ENCODE measurements at regions of chr17 and their contacts with region 1.

Region 1: GRCh38 chr17:8189711-8190477 is at the start of gene BORCS6:
- DNase-seq: peak; percentile 98
- H3K4me3 Mint-ChIP-seq: no peak within 1 kb of the TSS
- H3K27ac Mint-ChIP-seq: peak within 1 kb of the TSS; percentile 92
- H3K4me1 Mint-ChIP-seq: peaks cover 12% of the 10 kb centered on the region
- H3K27me3 Mint-ChIP-seq: no peaks in the 10 kb centered on the region
- total RNA-seq, gene BORCS6: 4.7 and 5.7 TPM in 2 replicates

Region 2: GRCh38 chr17:7844292-7845154 is 345.4 kb before region 1 on chr17:
- intact Hi-C with region 1: loop called (anchors 10 kb)
- DNase-seq: peak; percentile 96
- H3K4me3 Mint-ChIP-seq: peak overlapping the region; percentile 99
- H3K27ac Mint-ChIP-seq: peak overlapping the region; percentile 100
- H3K4me1 Mint-ChIP-seq: peaks cover 37% of the 10 kb centered on the region
- H3K27me3 Mint-ChIP-seq: peaks cover 2% of the 10 kb centered on the region

Region 3: GRCh38 chr17:8156246-8156992 is 33.5 kb before region 1 on chr17:
- intact Hi-C with region 1: loop called (anchors 2 kb)
- DNase-seq: peak; percentile 100
- H3K4me3 Mint-ChIP-seq: no peak overlapping the region
- H3K27ac Mint-ChIP-seq: no peak overlapping the region
- H3K4me1 Mint-ChIP-seq: peaks cover 62% of the 10 kb centered on the region
- H3K27me3 Mint-ChIP-seq: no peaks in the 10 kb centered on the region

Region 4: GRCh38 chr17:8173056-8173870 is 16.6 kb before region 1 on chr17:
- intact Hi-C with region 1: loop called (anchors 1 kb)
- DNase-seq: peak; percentile 93
- H3K4me3 Mint-ChIP-seq: peak overlapping the region; percentile 98
- H3K27ac Mint-ChIP-seq: peak overlapping the region; percentile 99
- H3K4me1 Mint-ChIP-seq: peaks cover 38% of the 10 kb centered on the region
- H3K27me3 Mint-ChIP-seq: no peaks in the 10 kb centered on the region

Region 5: DNA sequence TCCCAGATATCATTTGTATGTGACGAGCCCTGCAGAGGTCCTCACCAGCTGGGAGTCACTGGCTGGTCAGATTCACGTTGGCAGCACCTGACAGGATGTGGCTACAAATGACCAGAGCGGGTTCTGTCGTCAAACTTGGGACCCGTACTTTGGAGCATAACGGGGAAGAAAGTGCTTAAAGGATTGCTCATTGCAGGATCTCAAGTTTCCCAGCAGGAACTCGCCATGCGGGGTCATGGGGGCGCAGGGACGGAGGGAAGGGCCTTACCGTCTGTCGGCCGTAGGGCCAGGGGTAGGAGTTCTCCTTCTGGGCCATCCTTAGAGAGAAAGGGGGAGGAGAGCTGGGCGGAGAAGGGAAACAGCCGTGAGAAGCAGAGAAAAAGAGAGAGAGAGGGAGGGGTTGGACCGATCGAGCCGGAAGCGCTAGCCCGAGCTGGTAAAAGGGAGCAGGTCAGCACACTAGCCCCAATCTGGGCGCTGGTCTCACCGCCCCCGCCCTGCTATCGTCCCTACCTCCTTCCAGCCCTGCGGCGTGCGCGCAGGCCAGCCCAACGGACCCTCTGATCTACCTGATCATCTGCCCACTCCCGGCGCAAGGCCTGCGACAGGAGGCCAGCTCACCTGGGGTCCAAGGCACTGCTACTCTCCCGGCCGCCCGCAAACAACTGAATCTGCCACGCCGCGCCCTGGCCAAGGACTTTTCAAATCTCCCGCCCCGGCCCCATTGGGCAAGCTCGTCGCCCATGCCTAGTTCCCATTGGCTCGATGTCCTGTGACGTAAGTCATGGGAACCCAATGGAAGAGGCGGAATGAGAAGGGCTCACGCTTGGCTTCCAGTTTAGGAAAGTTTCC is 20.2 kb after region 1 on chr17 and contains the start of gene AURKB:
- intact Hi-C with region 1: loop called (anchors 1 kb)
- DNase-seq: peak; percentile 98
- H3K4me3 Mint-ChIP-seq: peak within 1 kb of the TSS; percentile 98
- H3K27ac Mint-ChIP-seq: peak within 1 kb of the TSS; percentile 98
- H3K4me1 Mint-ChIP-seq: peaks cover 27% of the 10 kb centered on the region
- H3K27me3 Mint-ChIP-seq: no peaks in the 10 kb centered on the region
- total RNA-seq, gene AURKB: 92.3 and 101 TPM in 2 replicates

Region 6: DNA sequence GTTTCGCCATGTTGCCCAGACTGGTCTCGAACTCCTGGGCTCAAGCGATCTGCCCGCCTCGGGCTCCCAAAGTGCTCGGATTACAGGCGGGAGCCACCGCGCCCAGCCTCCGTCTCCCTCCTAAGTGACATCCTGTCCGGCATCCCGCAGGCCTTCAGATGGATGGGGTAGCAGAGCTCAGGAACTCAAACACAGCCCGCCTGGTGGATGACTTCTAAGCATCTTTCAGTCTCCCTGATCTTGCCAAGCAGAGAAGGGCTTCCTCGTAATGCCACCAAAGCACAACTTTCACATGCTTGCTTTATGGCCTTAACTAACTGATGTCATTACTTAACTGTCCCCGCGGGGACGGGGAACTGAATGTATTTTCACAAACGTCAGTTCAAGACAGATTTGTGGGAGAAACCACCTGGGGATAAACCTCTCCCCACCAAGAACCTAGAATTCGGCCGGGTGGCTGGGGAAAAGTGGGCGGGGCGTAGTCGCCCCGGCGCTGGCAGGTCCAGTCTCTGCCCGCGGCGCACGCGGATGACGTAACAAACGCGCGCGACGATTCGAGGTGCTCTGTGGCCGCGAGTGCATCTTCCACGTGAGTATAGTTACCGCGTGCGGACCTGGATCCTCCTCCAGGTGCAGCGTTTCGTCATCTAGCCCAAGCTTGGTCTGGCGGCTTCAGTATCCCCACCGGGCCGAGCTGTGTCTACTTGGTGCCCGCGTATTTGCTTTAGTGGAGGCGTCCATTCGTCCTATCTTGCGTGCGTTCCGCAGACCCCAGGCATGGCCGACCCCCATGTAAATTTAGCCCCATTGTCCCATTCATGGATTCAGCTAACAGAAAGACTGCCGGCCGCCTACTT is 59.1 kb after region 1 on chr17 and contains the start of gene PFAS:
- intact Hi-C with region 1: loop called (anchors 1 kb)
- DNase-seq: peak; percentile 99
- H3K4me3 Mint-ChIP-seq: peak within 1 kb of the TSS; percentile 92
- H3K27ac Mint-ChIP-seq: peak within 1 kb of the TSS; percentile 99
- H3K4me1 Mint-ChIP-seq: peaks cover 36% of the 10 kb centered on the region
- H3K27me3 Mint-ChIP-seq: no peaks in the 10 kb centered on the region
- total RNA-seq, gene PFAS: 208 and 211 TPM in 2 replicates

Region 7: GRCh38 chr17:8359769-8360168 is 169.9 kb after region 1 on chr17:
- intact Hi-C with region 1: no loop called
- DNase-seq: no peak
- H3K4me3 Mint-ChIP-seq: no peak overlapping the region
- H3K27ac Mint-ChIP-seq: no peak overlapping the region
- H3K4me1 Mint-ChIP-seq: peaks cover 4% of the 10 kb centered on the region
- H3K27me3 Mint-ChIP-seq: peaks cover 2% of the 10 kb centered on the region

Measured in activated CD4-positive, alpha-beta T cell treated with anti-CD3 and anti-CD28 coated beads, Interleukin-2, amount 10 ng/mL, durations not matched to agents 24 days and 14 days (primary cell).